ENCODE measurements at regions of chr6 and their contacts with region 1.

Region 1: DNA sequence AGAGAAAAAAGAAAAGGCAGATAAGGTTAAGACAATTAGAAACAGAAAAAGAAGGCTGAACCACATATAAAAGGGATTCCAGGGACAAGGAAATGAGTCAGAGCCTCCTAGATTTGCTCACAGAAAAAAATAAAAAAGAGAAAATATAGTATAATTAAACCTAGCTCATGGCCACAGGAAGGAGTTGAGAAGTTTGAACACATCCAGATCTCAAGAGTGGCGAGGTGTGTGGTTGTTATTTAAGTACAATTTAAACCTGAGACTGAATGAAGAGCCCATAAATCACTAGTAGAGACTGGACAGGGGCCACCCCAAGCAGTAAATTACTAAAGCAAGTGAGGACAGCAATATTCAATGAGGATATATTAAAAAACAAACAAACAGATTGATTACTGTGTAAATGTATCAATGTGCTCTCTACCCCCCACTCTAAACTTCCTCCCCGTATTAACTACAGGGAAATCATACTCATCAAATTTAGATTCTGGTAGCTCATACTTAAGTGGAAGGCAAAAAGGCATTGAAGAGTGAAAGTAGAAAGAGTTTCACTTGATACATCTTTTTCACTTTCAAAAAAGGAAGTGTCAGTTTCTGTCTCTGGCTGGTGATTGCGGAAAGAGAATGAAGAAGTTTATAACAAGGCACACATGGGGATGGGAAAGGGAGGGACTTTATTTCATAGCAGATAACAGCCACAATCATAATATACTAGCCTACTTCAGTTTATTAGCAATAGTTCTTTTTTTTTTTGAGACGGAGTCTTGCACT is 49.3 kb upstream of the SCAF8 start:
- DNase-seq: peak; percentile 78
- H3K4me3 ChIP-seq: peak overlapping the region in 1 of 3 experiments; percentile 10
- H3K27ac ChIP-seq: peak overlapping the region; percentile 61
- H3K4me1 ChIP-seq: peaks cover 13% of the 10 kb centered on the region
- H3K27me3 ChIP-seq: no peaks in the 10 kb centered on the region
- CTCF ChIP-seq: no peak
- POLR2A ChIP-seq: no peak

Region 2: DNA sequence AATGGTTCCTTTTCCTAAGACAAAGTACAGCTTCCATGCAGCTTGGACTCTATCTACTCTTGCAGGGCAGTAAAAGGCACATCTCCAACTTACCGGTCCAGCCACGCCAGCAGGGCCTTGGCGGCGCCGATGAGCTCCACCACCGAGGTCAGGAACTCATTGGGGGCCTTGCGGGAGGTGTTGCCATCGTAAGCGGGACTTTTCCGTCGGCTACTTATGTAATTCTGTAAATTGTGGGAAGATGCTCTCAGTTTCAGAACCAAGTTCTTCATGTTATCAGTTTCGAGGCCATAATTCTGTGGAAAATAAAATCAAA is 242.0 kb before region 1 on chr6:
- CTCF ChIA-PET with region 1: no interaction called
- POLR2A ChIA-PET with region 1: no interaction called
- dilution Hi-C with region 1: no loop called
- intact Hi-C with region 1: no loop called
- DNase-seq: no peak
- H3K4me3 ChIP-seq: no peak overlapping the region
- H3K27ac ChIP-seq: no peak overlapping the region
- H3K4me1 ChIP-seq: no peaks in the 10 kb centered on the region
- H3K27me3 ChIP-seq: no peaks in the 10 kb centered on the region
- CTCF ChIP-seq: no peak
- POLR2A ChIP-seq: no peak

Region 3: GRCh38 chr6:154805288-154805911 is 121.5 kb after region 1 on chr6:
- CTCF ChIA-PET with region 1: interaction called, 19 read pairs
- POLR2A ChIA-PET with region 1: no interaction called
- dilution Hi-C with region 1: no loop called
- intact Hi-C with region 1: no loop called
- DNase-seq: peak; percentile 69
- H3K4me3 ChIP-seq: no peak overlapping the region
- H3K27ac ChIP-seq: no peak overlapping the region
- H3K4me1 ChIP-seq: no peaks in the 10 kb centered on the region
- H3K27me3 ChIP-seq: no peaks in the 10 kb centered on the region
- CTCF ChIP-seq: peak in 1 of 2 donors; percentile 30
- POLR2A ChIP-seq: no peak